ENCODE measurements at regions of chr3 and their contacts with region 1.

Region 1: GRCh38 chr3:61561374-61562041 is at the start of gene PTPRG:
- DNase-seq: peak; percentile 91 to 94 (median 92)
- ATAC-seq: peak; percentile 59 to 84 (median 78)
- H3K4me3 ChIP-seq: peak within 1 kb of the TSS; percentile 65 to 97 (median 88)
- H3K27ac ChIP-seq: peak within 1 kb of the TSS; percentile 91 to 98 (median 96)
- H3K4me1 ChIP-seq: peaks cover 0 to 40% (median 16%) of the 10 kb centered on the region in 12 donors
- H3K27me3 ChIP-seq: peaks cover 0 to 28% (median 0%) of the 10 kb centered on the region in 9 donors
- CTCF ChIP-seq: no peak
- POLR2A ChIP-seq: peak in 1 of 2 donors; percentile 77
- total RNA-seq, gene PTPRG: 23.5 to 48.5 (median 35.6) TPM

Region 2: DNA sequence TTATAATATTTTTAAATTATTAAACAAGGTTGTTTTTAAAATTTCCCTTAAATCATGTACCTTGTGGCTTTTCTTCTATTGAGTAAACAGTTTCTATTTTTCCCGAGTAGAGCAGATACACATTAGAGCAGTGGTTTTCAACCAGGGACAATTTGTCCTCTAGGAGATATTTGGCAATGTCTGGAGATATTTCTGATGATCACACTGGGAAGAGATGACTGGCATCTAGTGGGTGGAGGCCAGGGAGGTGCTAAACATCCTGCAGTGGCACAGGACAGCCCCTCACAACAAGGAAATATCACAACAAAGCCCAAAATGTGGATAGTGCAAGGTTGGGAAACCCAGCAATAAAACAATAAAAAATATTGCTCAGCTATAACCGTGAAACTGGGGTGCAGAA is 113.1 kb before region 1 on chr3:
- intact Hi-C with region 1: loop called in 2 of 10 experiments (anchors 10 kb)
- DNase-seq: peak in 1 of 5 donors; percentile 33
- ATAC-seq: peak; percentile 78 to 91 (median 85)
- H3K4me3 ChIP-seq: no peak overlapping the region
- H3K27ac ChIP-seq: peak overlapping the region in 7 of 12 donors; percentile 12 to 57 (median 28)
- H3K4me1 ChIP-seq: peaks cover 0 to 19% (median 6%) of the 10 kb centered on the region in 12 donors
- H3K27me3 ChIP-seq: no peaks in the 10 kb centered on the region
- CTCF ChIP-seq: no peak
- POLR2A ChIP-seq: no peak

Region 3: GRCh38 chr3:61748718-61749117 is 187.2 kb after region 1 on chr3:
- intact Hi-C with region 1: loop called in 1 of 10 experiments (anchors 5 kb)
- DNase-seq: no peak
- ATAC-seq: no peak
- H3K4me3 ChIP-seq: no peak overlapping the region
- H3K27ac ChIP-seq: no peak overlapping the region
- H3K4me1 ChIP-seq: peaks cover 0 to 42% (median 11%) of the 10 kb centered on the region in 12 donors
- H3K27me3 ChIP-seq: no peaks in the 10 kb centered on the region
- CTCF ChIP-seq: no peak
- POLR2A ChIP-seq: no peak

Region 4: DNA sequence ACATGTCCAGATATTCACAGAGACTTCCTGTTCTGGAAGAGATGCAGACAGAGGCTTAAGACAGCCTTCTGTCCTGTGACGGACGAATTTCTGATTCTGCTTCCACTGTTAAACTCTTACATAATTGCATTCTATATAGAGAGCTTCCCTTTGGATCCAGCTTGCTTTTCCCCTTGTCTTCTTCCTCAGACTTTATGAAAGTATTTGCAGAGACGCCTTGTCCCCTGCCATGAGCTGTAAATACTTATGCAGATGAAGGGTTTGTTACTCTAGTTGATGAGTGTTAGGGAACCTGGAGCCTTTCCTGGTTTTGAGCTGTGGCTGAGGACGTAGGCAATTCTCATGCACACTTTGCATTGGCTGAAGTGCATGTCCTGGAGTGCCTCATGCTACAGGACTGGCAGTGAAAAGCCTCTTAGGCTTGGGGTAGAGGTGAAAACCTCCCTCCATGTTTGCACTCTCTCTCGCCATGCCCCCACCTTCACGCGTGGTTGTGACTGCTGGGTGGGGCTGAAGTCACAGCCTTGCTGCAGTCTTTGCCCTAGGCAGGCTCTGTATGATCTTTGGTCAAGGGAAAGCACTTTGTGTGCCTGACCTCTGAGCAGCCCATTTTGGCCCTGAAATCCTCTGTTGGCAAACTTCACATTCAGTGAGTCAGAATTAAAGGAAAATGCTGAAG is 286.4 kb after region 1 on chr3:
- intact Hi-C with region 1: loop called in 4 of 10 experiments (anchors 2 to 5 kb)
- DNase-seq: peak; percentile 38 to 74 (median 71)
- ATAC-seq: peak; percentile 74 to 92 (median 86)
- H3K4me3 ChIP-seq: peak overlapping the region in 8 of 12 donors; percentile 6 to 26 (median 12)
- H3K27ac ChIP-seq: peak overlapping the region; percentile 74 to 93 (median 84)
- H3K4me1 ChIP-seq: peaks cover 16 to 67% (median 47%) of the 10 kb centered on the region in 12 donors
- H3K27me3 ChIP-seq: no peaks in the 10 kb centered on the region
- CTCF ChIP-seq: no peak
- POLR2A ChIP-seq: no peak

Region 5: DNA sequence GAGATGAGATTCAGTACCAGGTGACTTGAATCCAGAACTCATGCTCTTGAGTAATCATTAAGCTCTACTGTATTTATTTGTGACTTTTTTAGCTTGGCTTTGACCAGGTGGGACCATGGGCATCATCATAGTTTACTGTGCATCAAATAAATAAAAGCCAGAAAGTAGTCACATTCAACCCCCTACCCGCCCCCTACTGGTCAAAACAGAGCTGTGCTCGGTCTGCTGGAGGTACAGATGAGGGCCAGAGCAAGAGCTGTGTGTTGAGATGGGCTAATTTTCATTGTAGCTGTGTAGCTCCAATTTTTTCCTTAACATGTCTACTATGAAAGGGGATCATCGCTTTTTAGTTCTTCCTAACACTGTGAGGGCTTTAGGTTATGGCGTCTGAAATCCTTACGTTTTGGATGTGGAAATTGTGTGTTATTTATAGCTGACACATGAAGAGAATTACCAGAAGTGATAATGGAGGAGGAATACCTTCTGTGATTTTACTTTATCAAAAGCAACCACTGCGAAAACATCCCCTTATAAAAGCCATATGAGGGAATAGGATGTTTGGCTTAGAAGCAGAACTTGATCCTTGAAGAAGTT is 374.9 kb after region 1 on chr3:
- intact Hi-C with region 1: loop called in 1 of 10 experiments (anchors 10 kb)
- DNase-seq: peak in 1 of 5 donors; percentile 33
- ATAC-seq: peak in 2 of 4 donors; percentile 7 to 13
- H3K4me3 ChIP-seq: no peak overlapping the region
- H3K27ac ChIP-seq: no peak overlapping the region
- H3K4me1 ChIP-seq: peaks cover 0 to 30% (median 9%) of the 10 kb centered on the region in 12 donors
- H3K27me3 ChIP-seq: no peaks in the 10 kb centered on the region
- CTCF ChIP-seq: peak; percentile 17 to 55 (median 38)
- POLR2A ChIP-seq: no peak

Region 6: GRCh38 chr3:62188681-62189383 is 627.3 kb after region 1 on chr3:
- intact Hi-C with region 1: loop called (anchors 1 to 5 kb)
- DNase-seq: peak; percentile 66 to 79 (median 71)
- ATAC-seq: peak; percentile 45 to 74 (median 66)
- H3K4me3 ChIP-seq: peak overlapping the region in 1 of 12 donors; percentile 24
- H3K27ac ChIP-seq: peak overlapping the region in 1 of 12 donors; percentile 9
- H3K4me1 ChIP-seq: peaks cover 0 to 30% (median 16%) of the 10 kb centered on the region in 12 donors
- H3K27me3 ChIP-seq: no peaks in the 10 kb centered on the region
- CTCF ChIP-seq: peak; percentile 76 to 89 (median 84)
- POLR2A ChIP-seq: no peak

Measured in heart left ventricle (tissue), 16 donors.